Posterior cingulate gyrus (tissue), 11 donors: ENCODE measurements at regions of chr2 and their contacts with region 1.

Region 1: DNA sequence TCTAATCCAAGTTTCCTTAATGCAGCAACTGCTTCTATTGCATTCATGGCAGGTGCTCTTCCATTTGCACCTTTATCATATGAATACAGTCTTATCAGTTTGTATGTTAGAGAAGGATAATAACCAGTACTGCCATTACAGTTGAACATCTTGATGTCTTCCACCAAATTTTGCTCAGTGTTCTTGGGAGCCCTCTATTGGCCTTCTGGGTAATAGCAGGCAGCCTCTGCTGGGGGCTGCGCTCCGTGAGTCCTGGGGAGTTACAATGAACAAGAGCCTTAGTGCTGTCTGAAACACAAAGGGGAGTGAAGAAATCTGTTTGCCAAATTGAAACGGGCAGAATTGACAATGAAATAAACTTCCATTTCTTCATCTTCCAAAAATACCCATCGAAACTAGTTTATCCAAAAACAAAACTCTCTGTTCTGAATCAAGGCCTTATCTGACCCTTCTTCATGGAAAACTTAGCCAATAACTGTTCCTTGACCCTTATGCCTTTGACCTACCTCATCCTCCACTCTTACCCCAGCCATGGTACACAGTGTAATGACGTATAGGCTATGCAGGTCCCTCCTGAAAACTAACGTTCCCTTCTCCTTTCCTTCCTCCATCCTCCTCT is 79.9 kb downstream of the ALK start:
- DNase-seq: peak in 6 of 10 donors; percentile 38 to 82 (median 44)

Region 2: DNA sequence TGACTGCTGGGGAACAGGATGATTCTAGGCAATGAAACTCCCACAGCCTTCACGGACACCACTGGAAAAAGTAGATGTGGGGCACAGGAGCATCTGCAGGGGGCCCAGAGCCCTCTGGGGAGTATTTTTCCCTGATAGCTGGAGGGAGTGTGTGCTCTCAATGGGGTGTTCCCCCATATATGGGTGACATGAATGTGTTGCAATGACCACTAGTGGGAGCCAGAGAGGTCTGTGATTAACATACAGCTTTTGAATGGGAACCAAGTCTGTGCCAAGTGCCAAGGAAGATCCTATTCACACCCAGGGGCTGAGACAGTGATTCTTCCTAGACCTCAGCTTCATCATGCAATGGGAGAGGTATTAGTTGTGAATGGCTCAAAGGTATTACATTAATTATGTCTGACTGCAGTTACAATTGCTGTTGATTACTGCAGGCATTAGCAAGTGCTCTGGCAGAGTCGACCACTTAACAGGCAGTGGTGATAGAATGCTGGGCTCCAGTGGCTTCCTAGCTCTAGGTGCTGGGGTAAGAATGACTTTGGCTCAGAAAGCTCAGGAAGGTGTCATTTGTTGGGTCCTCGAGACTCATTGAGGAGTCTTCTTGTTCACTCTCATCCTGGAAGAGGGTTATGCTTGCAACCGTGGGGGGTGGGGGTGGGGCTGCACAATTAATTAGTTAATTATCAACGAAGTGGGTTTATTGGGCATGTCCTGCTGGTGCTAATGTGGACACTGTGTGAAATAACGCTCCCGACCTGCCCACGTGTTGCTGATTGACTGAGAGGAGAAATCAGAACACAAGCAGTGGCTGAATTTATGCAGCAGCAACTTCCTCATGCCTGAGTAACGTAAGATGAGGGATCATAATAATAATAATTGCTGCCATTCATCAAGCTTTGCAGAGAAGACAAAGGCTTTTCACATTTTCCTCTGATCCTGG is 532.1 kb before region 1 on chr2:
- intact Hi-C with region 1: loop called (anchors 2 kb)
- DNase-seq: peak in 3 of 10 donors; percentile 28 to 50 (median 46)